ENCODE measurements at regions of chr14 and their contacts with region 1.

Region 1: DNA sequence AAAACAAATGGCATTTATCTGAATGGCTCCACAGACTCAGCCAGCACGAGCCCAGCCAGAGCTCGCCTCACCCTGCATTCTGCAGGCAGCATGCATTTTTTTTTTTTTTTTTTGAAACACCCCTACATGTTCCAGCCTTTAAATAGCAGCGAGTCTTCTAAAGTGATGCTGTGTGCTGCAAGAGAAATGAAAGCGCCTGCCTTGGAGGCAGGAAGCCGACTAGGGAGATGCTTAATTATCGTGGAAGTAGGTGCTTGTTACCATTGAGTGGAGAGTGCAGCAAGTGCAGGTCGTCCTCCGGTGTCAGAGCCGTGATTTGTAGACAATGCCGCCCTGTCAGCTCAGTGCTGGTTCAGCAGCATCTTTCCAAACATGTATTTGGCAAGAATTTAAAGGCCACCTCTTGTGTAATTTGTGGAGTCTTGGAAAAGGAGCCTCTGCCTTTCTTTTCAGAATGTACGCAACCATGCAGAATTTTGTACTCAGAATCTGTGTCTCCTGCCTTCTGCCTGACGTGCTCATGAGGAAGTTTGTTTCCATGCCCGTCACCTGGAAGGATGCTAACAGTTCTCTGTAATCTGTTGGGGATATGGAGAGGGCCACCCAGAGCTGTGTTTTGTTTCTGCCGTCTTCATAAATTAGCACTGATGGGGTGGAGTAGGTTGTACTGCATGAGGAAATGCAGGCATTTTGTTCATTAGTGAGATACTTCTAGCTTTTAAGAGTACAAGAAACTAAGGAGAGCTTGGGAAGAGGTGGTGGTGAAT is 345.9 kb upstream of the RGS6 start:
- DNase-seq: peak; percentile 59
- ATAC-seq: peak; percentile 49
- H3K4me3 ChIP-seq: peak overlapping the region; percentile 23
- H3K27ac ChIP-seq: peak overlapping the region; percentile 66; the same call in 1 of the 2 replicates
- H3K4me1 ChIP-seq: peaks cover 10% of the 10 kb centered on the region
- H3K27me3 ChIP-seq: no peaks in the 10 kb centered on the region
- CTCF ChIP-seq: no peak
- POLR2A ChIP-seq: no peak
- RAD21 ChIP-seq: no peak

Region 2: GRCh38 chr14:71138448-71139293 is 447.6 kb before region 1 on chr14:
- CTCF ChIA-PET with region 1: no interaction called
- POLR2A ChIA-PET with region 1: no interaction called
- dilution Hi-C with region 1: no loop called
- in situ Hi-C with region 1: no loop called
- intact Hi-C with region 1: loop called (anchors 10 kb)
- DNase-seq: peak; percentile 48
- ATAC-seq: peak; percentile 73
- H3K4me3 ChIP-seq: no peak overlapping the region
- H3K27ac ChIP-seq: no peak overlapping the region
- H3K4me1 ChIP-seq: peaks cover 16% of the 10 kb centered on the region
- H3K27me3 ChIP-seq: no peaks in the 10 kb centered on the region
- CTCF ChIP-seq: peak; percentile 86
- POLR2A ChIP-seq: peak; percentile 57; the same call in 1 of the 2 replicates
- RAD21 ChIP-seq: peak; percentile 97

Region 3: GRCh38 chr14:72495664-72496264 is 909.5 kb after region 1 on chr14:
- CTCF ChIA-PET with region 1: no interaction called
- POLR2A ChIA-PET with region 1: no interaction called
- dilution Hi-C with region 1: no loop called
- in situ Hi-C with region 1: no loop called
- intact Hi-C with region 1: no loop called
- DNase-seq: peak; percentile 34
- ATAC-seq: peak; percentile 66
- H3K4me3 ChIP-seq: no peak overlapping the region
- H3K27ac ChIP-seq: no peak overlapping the region
- H3K4me1 ChIP-seq: no peaks in the 10 kb centered on the region
- H3K27me3 ChIP-seq: peaks cover 24% of the 10 kb centered on the region
- CTCF ChIP-seq: no peak
- POLR2A ChIP-seq: no peak
- RAD21 ChIP-seq: no peak